Ascending aorta (tissue), 2 donors: ENCODE measurements at regions of chr3 and their contacts with region 1.

Region 1: GRCh38 chr3:155701882-155702465 is 42.9 kb downstream of the PLCH1 start:
- DNase-seq: no peak
- H3K4me3 ChIP-seq: no peak overlapping the region
- H3K27ac ChIP-seq: no peak overlapping the region
- H3K4me1 ChIP-seq: no peaks in the 10 kb centered on the region
- H3K27me3 ChIP-seq: no peaks in the 10 kb centered on the region
- CTCF ChIP-seq: peak; percentile 46 to 64 (median 53)

Region 2: GRCh38 chr3:154334973-154335420 is 1367.0 kb before region 1 on chr3:
- intact Hi-C with region 1: loop called (anchors 5 kb)
- DNase-seq: no peak
- H3K4me3 ChIP-seq: no peak overlapping the region
- H3K27ac ChIP-seq: no peak overlapping the region
- H3K4me1 ChIP-seq: no peaks in the 10 kb centered on the region
- H3K27me3 ChIP-seq: no peaks in the 10 kb centered on the region
- CTCF ChIP-seq: peak in 2 of 3 experiments; percentile 52 to 60

Region 3: DNA sequence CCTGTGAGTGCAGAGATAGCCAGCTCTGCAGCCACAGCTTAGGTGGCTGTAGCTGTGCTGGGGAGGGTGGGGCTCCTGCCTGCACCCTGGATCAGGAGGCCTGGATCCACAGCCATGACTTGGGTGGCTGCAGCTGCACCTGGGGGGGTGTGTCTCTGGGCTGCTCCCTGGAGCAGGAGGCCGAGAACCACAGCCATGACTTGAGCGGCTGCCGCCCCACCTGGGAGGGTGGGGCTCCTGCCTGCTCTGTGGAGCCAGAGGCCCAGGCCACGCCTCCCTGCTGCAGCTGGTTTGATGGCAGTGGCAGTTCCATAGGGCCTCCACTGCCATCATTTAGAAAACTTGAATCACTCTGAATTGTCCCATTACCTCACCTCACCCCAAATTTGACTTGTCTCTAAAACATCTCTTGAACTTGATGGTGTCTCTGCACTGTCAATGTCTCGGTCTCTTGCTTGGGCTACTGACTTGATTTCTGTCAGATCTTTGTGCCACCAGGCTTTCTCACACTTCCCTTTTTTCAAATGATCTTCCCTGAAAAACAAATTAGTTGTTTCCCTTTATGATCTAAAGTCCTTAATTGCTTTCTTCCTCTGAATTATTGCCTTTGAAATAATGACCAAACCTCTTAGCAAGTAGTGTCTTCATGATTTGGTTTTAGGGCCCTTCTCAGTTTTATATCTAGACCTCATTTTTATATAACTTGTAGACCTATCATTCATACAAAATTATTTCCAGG is 935.0 kb before region 1 on chr3:
- intact Hi-C with region 1: loop called (anchors 10 kb)
- DNase-seq: no peak
- H3K4me3 ChIP-seq: no peak overlapping the region
- H3K27ac ChIP-seq: no peak overlapping the region
- H3K4me1 ChIP-seq: no peaks in the 10 kb centered on the region
- H3K27me3 ChIP-seq: no peaks in the 10 kb centered on the region
- CTCF ChIP-seq: no peak

Region 4: DNA sequence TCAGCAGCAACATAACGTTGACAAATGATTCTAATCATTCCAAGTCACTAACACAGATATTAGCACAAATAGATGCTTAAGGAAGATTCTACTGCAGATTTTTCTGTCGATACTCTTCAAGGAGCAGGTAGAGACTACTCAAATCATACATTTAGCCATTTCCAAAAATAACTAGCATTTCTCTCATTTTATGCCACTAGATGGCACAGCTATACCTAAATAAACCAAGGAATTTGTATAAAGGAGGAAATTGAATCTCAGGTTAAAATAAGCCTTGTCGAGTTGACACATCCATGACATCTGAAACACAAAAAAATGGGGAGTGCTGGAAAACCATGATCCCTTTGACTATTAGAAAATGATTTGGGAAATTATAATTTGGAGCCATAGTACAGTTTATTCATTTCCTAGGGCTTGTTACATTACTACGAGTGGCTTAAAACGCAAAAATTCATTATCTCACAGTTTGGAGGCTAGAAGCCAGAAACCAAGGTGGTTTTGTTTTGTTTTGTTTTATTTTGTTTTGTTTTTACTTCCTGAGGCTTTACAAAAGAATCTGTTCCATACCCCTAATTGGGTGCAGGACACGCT is 349.0 kb before region 1 on chr3:
- intact Hi-C with region 1: loop called (anchors 2 kb)
- DNase-seq: no peak
- H3K4me3 ChIP-seq: no peak overlapping the region
- H3K27ac ChIP-seq: no peak overlapping the region
- H3K4me1 ChIP-seq: no peaks in the 10 kb centered on the region
- H3K27me3 ChIP-seq: no peaks in the 10 kb centered on the region
- CTCF ChIP-seq: peak in 2 of 3 experiments; percentile 41 to 46

Region 5: GRCh38 chr3:155870133-155870944 is 168.4 kb after region 1 on chr3 and contains the start of gene GMPS:
- intact Hi-C with region 1: no loop called
- DNase-seq: peak; percentile 87 to 97
- H3K4me3 ChIP-seq: peak within 1 kb of the TSS; percentile 77 to 90
- H3K27ac ChIP-seq: peak within 1 kb of the TSS; percentile 96 to 98
- H3K4me1 ChIP-seq: peaks cover 0 to 25% of the 10 kb centered on the region in 2 donors
- H3K27me3 ChIP-seq: no peaks in the 10 kb centered on the region
- CTCF ChIP-seq: peak; percentile 35 to 62 (median 60)
- total RNA-seq, gene GMPS: 17.8 TPM